ENCODE measurements at regions of chr1 and their contacts with region 1.

Region 1: GRCh38 chr1:61453111-61453961 is 271.6 kb downstream of the TM2D1 start:
- DNase-seq: peak; percentile 93 to 94
- ATAC-seq: peak; percentile 89
- H3K4me3 ChIP-seq: no peak overlapping the region
- H3K27ac ChIP-seq: peak overlapping the region; percentile 95
- H3K4me1 ChIP-seq: peaks cover 3 to 11% of the 10 kb centered on the region in 2 donors
- H3K27me3 ChIP-seq: no peaks in the 10 kb centered on the region

Region 2: GRCh38 chr1:60984062-60984799 is 469.1 kb before region 1 on chr1:
- intact Hi-C with region 1: loop called in 1 of 2 experiments (anchors 5 kb)
- DNase-seq: peak; percentile 72 to 80
- ATAC-seq: peak; percentile 92
- H3K4me3 ChIP-seq: no peak overlapping the region
- H3K27ac ChIP-seq: peak overlapping the region; percentile 90 to 98
- H3K4me1 ChIP-seq: peaks cover 1 to 9% of the 10 kb centered on the region in 2 donors
- H3K27me3 ChIP-seq: no peaks in the 10 kb centered on the region

Region 3: DNA sequence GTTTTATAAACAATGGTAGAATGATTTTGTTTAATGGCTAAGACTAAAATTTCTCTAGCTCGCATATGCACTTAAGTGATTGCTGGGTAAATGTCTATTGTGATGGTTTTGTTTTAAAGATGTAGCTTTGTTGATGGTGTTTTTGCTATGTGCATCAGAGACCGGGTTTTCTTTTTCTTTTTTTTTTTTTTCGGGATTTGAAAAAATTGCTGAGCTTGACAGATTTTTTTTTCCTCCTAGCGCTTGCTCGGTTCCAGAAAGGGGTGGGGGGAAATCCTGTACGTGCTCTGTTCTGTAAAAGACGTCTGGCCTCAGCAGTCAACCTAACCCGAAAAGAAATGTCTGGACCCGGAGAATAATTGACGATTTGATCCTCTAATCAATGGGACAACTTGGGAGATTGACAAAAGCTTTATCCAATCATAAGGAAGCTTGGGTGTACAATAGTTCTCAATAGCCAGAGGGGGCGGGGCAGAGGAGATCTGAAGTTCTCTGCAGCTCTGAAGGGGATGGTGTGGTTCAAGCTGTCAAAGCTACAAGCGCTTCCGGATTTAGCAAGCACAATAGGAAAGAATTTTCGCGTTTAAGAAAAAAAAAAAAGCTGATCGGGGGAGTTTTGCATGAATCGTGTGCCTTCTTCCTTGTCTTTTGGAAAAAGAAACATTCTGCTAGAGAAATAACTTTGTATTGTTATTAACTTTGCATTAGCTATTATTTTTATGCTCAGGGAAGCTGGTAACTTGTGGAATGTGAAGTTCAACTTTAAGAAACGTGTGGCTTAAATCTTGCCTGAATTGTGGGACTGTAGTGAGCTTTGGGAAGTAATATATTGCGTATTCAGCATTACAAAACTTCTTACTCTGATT is 375.4 kb before region 1 on chr1:
- intact Hi-C with region 1: loop called in 1 of 2 experiments (anchors 5 kb)
- DNase-seq: peak; percentile 92 to 96
- ATAC-seq: peak; percentile 83
- H3K4me3 ChIP-seq: peak overlapping the region; percentile 46 to 58
- H3K27ac ChIP-seq: peak overlapping the region in 1 of 2 donors; percentile 33
- H3K4me1 ChIP-seq: no peaks in the 10 kb centered on the region
- H3K27me3 ChIP-seq: no peaks in the 10 kb centered on the region

Region 4: GRCh38 chr1:61184040-61184713 is 269.2 kb before region 1 on chr1:
- intact Hi-C with region 1: loop called (anchors 5 to 10 kb)
- DNase-seq: peak; percentile 94 to 97
- ATAC-seq: peak; percentile 93
- H3K4me3 ChIP-seq: peak overlapping the region; percentile 8 to 71
- H3K27ac ChIP-seq: peak overlapping the region; percentile 69 to 86
- H3K4me1 ChIP-seq: peaks cover 4 to 11% of the 10 kb centered on the region in 2 donors
- H3K27me3 ChIP-seq: no peaks in the 10 kb centered on the region

Region 5: DNA sequence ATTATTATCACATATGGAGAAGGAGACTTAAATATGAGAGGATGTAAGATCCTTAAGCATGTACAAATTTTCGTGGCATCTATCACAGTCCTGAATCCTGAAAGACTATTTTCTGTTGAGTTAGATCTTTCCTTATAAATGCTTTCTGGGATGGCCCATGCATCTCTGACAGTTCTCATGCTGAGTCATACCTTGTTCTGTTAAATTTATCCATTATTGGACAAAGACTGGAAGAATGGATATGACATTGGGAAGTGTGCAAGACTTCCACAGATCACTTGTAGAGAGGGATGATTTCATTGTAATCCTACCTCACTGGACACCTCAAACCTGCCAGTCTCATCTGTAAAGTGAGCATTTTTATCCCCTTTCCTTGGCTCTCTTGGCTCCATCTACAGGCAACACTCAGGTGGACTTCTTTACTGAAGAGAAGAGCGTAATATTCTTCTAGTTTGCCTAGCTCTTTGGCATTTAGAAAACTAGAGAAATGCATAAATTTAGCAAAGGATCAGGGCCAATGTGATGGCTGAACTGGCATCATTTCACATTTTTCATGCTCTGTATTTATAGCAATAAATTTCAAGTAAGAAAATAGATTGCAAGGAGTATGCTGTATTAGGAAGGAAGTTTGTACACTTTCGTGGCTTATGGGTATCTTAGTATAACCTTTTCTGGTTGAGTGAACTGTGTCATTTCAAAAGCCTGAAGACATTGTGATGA is 242.7 kb before region 1 on chr1:
- intact Hi-C with region 1: no loop called
- DNase-seq: no peak
- ATAC-seq: peak; percentile 39
- H3K4me3 ChIP-seq: no peak overlapping the region
- H3K27ac ChIP-seq: peak overlapping the region; percentile 12 to 43
- H3K4me1 ChIP-seq: peaks cover 6 to 9% of the 10 kb centered on the region in 2 donors
- H3K27me3 ChIP-seq: no peaks in the 10 kb centered on the region

Region 6: GRCh38 chr1:61403679-61404596 is 49.4 kb before region 1 on chr1:
- intact Hi-C with region 1: loop called in 1 of 2 experiments (anchors 5 kb)
- DNase-seq: no peak
- ATAC-seq: peak; percentile 47
- H3K4me3 ChIP-seq: no peak overlapping the region
- H3K27ac ChIP-seq: peak overlapping the region; percentile 9 to 83
- H3K4me1 ChIP-seq: peaks cover 7 to 8% of the 10 kb centered on the region in 2 donors
- H3K27me3 ChIP-seq: no peaks in the 10 kb centered on the region

Region 7: GRCh38 chr1:61556631-61557030 is 103.3 kb after region 1 on chr1:
- intact Hi-C with region 1: no loop called
- DNase-seq: no peak
- ATAC-seq: no peak
- H3K4me3 ChIP-seq: no peak overlapping the region
- H3K27ac ChIP-seq: no peak overlapping the region
- H3K4me1 ChIP-seq: no peaks in the 10 kb centered on the region
- H3K27me3 ChIP-seq: no peaks in the 10 kb centered on the region

Measured in aorta (tissue), 5 donors.